ENCODE measurements at regions of chr15 and their contacts with region 1.

Region 1: DNA sequence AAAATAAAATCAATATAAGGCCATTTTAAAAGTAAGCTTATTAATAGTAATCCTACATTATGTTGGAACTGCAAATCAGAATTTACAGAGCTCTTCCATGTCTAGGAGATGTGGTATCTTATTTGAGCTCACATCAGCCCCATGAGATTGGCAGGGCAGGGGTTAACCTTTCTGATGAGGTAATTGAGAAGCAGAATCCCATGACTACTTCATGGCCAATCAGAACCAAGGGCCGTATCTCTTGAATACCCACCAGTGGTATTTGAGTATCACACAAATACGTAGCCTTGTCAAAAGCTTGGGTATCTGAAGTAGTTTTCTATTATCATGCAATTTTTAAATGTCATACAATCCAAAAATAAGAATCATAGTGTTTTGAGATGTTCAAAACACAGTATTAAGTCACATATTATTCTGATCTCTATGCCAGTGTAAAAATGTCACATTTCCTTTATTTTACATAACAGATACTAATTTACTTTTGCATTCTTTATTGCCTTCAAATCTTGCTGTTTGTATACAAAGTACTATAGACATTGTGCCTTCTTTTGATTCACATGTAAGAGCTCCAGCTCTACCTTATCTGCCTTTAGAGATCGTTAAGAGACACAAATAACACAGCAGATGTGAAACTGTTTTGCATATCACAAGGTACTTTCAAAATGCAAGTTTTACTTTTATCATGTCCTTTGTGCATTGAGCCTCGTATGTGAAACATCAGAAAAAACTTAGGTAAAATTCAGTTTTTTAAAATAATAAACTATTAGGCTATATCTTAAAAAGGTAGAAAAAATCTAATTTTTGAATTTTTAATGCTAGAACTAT is 251.7 kb upstream of the GOLGA6L4 start:
- DNase-seq: no peak
- H3K4me3 ChIP-seq: no peak overlapping the region
- H3K27ac ChIP-seq: no peak overlapping the region
- H3K4me1 ChIP-seq: no peaks in the 10 kb centered on the region
- H3K27me3 ChIP-seq: no peaks in the 10 kb centered on the region
- CTCF ChIP-seq: no peak
- EP300 ChIP-seq: no peak
- RAD21 ChIP-seq: no peak

Region 2: GRCh38 chr15:83973816-83974215 is 10.0 kb before region 1 on chr15:
- CTCF ChIA-PET with region 1: interaction called, 18 read pairs
- POLR2A ChIA-PET with region 1: no interaction called
- DNase-seq: peak; percentile 20
- H3K4me3 ChIP-seq: no peak overlapping the region
- H3K27ac ChIP-seq: no peak overlapping the region
- H3K4me1 ChIP-seq: no peaks in the 10 kb centered on the region
- H3K27me3 ChIP-seq: no peaks in the 10 kb centered on the region
- CTCF ChIP-seq: peak; percentile 43
- EP300 ChIP-seq: no peak
- RAD21 ChIP-seq: 0 out of 2 replicates have a peak, but pooled peaks have one; percentile 26